T-cell (primary cell): ENCODE measurements at regions of chr9 and their contacts with region 1.

Region 1: GRCh38 chr9:32278991-32279390 is 105.5 kb upstream of the ACO1 start:
- DNase-seq: no peak
- ATAC-seq: no peak
- H3K4me3 ChIP-seq: no peak overlapping the region
- H3K4me3 Mint-ChIP-seq: no peak overlapping the region
- H3K27ac ChIP-seq: no peak overlapping the region
- H3K27ac Mint-ChIP-seq: no peak overlapping the region
- H3K4me1 ChIP-seq: no peaks in the 10 kb centered on the region
- H3K4me1 Mint-ChIP-seq: no peaks in the 10 kb centered on the region
- H3K27me3 ChIP-seq: no peaks in the 10 kb centered on the region
- H3K27me3 Mint-ChIP-seq: peaks cover 0 to 6% of the 10 kb centered on the region in 2 donors

Region 2: GRCh38 chr9:32177396-32177795 is 101.6 kb before region 1 on chr9:
- CTCF ChIA-PET with region 1: no interaction called
- POLR2A ChIA-PET with region 1: no interaction called
- DNase-seq: no peak
- ATAC-seq: no peak
- H3K4me3 ChIP-seq: no peak overlapping the region
- H3K4me3 Mint-ChIP-seq: no peak overlapping the region
- H3K27ac ChIP-seq: no peak overlapping the region
- H3K27ac Mint-ChIP-seq: no peak overlapping the region
- H3K4me1 ChIP-seq: no peaks in the 10 kb centered on the region
- H3K4me1 Mint-ChIP-seq: no peaks in the 10 kb centered on the region
- H3K27me3 ChIP-seq: no peaks in the 10 kb centered on the region
- H3K27me3 Mint-ChIP-seq: no peaks in the 10 kb centered on the region

Region 3: DNA sequence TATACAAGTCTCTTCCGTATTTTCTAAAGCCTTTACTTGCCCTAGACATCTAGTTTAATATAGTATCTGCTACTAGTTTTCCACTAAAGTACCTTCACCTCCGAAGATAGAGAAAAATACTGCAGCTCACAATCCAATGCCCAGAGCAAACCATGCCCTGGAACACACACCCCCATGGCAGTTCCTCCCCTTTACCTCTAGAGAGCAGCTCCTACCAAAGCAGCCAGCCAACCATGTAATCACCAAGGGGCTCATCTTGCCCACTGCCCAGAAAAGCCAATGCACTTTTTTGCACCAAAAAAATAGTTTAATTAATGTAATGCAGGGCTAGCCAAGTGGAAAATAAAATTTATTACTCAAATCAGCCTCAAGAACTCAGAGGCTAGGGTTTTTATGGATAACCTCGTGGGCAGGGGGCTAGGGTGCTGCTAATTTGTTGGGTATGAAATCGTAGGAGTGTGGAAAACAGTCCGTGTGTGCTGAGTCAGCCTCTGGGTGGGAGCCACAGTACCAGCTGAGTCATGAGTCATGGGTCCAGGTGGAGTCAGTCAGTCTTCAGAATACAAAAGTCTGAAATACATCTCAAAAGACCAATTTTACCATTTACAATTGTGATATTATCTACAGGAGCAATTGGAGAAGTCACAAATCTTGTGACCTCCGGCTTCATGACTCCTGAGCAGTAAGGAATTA is 14.7 kb before region 1 on chr9:
- CTCF ChIA-PET with region 1: no interaction called
- POLR2A ChIA-PET with region 1: interaction called in 1 of 2 experiments, 11 read pairs
- DNase-seq: no peak
- ATAC-seq: no peak
- H3K4me3 ChIP-seq: no peak overlapping the region
- H3K4me3 Mint-ChIP-seq: no peak overlapping the region
- H3K27ac ChIP-seq: no peak overlapping the region
- H3K27ac Mint-ChIP-seq: no peak overlapping the region
- H3K4me1 ChIP-seq: no peaks in the 10 kb centered on the region
- H3K4me1 Mint-ChIP-seq: no peaks in the 10 kb centered on the region
- H3K27me3 ChIP-seq: no peaks in the 10 kb centered on the region
- H3K27me3 Mint-ChIP-seq: peaks cover 4 to 8% of the 10 kb centered on the region in 2 donors